ENCODE measurements at regions of chr6 and their contacts with region 1.

Region 1: GRCh38 chr6:123802697-123803496 is 768 bp upstream of the NKAIN2 start:
- DNase-seq: peak; percentile 80
- H3K4me3 ChIP-seq: peak overlapping the region; percentile 36 to 68 (median 56)
- H3K27ac ChIP-seq: no peak overlapping the region
- H3K4me1 ChIP-seq: peaks cover 9% of the 10 kb centered on the region
- H3K27me3 ChIP-seq: peaks cover 17 to 25% of the 10 kb centered on the region in 2 experiments
- CTCF ChIP-seq: peak; percentile 89 to 94
- POLR2A ChIP-seq: no peak

Region 2: GRCh38 chr6:123598011-123598410 is 204.9 kb before region 1 on chr6:
- CTCF ChIA-PET with region 1: no interaction called
- POLR2A ChIA-PET with region 1: no interaction called
- dilution Hi-C with region 1: no loop called
- intact Hi-C with region 1: no loop called
- DNase-seq: no peak
- H3K4me3 ChIP-seq: no peak overlapping the region
- H3K27ac ChIP-seq: no peak overlapping the region
- H3K4me1 ChIP-seq: no peaks in the 10 kb centered on the region
- H3K27me3 ChIP-seq: no peaks in the 10 kb centered on the region
- CTCF ChIP-seq: no peak
- POLR2A ChIP-seq: no peak

Region 3: DNA sequence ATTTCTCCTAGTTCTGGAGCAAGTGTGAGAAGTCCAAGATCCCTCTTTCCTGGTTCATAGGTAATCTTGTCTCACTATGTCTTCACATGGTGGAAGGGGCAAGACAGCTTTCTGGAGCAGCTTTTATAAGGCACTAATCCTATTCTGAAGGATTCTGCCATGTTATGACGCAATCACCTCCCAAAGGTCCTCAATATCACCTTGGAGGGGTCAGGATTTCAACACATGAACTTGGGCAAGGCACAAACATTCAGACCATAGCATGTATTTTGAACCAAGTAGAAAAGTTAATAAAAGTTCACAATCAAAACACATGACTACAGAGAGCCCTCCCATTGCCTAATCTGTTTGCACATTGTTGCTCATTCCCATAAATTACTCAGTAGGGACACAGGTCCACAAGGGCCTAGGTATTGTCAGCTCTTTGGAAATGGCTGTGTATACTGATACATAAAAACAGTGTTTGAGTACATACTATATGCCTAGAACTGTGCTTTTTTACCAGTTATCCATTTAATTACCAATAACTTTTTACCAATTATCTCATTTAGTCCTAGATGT is 154.8 kb before region 1 on chr6:
- CTCF ChIA-PET with region 1: no interaction called
- POLR2A ChIA-PET with region 1: no interaction called
- dilution Hi-C with region 1: no loop called
- intact Hi-C with region 1: no loop called
- DNase-seq: no peak
- H3K4me3 ChIP-seq: no peak overlapping the region
- H3K27ac ChIP-seq: no peak overlapping the region
- H3K4me1 ChIP-seq: peaks cover 7% of the 10 kb centered on the region
- H3K27me3 ChIP-seq: no peaks in the 10 kb centered on the region
- CTCF ChIP-seq: no peak
- POLR2A ChIP-seq: no peak

Region 4: DNA sequence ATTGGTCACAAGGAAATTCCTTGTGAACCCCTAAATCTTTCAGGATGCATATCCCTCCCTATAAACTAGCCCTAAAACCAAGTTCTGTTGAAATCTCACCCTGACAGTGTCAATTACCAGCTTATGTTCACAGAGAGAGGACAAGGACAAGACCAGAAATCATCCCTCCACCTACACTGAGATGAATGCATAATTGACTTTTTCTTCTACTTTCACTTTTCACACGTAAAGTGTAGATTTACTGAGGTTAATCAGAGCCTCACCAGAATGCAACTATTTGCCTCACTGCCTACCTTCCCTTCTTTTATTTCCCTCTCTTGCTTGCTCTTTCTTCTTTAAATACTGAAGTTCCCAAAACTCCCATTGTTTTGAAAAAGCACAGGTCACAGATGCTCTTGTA is 14.6 kb before region 1 on chr6:
- CTCF ChIA-PET with region 1: interaction called, 18 read pairs
- POLR2A ChIA-PET with region 1: no interaction called
- dilution Hi-C with region 1: no loop called
- intact Hi-C with region 1: no loop called
- DNase-seq: no peak
- H3K4me3 ChIP-seq: no peak overlapping the region
- H3K27ac ChIP-seq: no peak overlapping the region
- H3K4me1 ChIP-seq: no peaks in the 10 kb centered on the region
- H3K27me3 ChIP-seq: peaks cover 0 to 3% of the 10 kb centered on the region in 2 experiments
- CTCF ChIP-seq: no peak
- POLR2A ChIP-seq: no peak

Region 5: GRCh38 chr6:123965894-123966293 is 163.0 kb after region 1 on chr6:
- CTCF ChIA-PET with region 1: interaction called, 72 read pairs
- POLR2A ChIA-PET with region 1: no interaction called
- dilution Hi-C with region 1: no loop called
- intact Hi-C with region 1: loop called (anchors 1 kb)
- DNase-seq: peak; percentile 61
- H3K4me3 ChIP-seq: no peak overlapping the region
- H3K27ac ChIP-seq: no peak overlapping the region
- H3K4me1 ChIP-seq: no peaks in the 10 kb centered on the region
- H3K27me3 ChIP-seq: no peaks in the 10 kb centered on the region
- CTCF ChIP-seq: peak; percentile 47 to 48
- POLR2A ChIP-seq: no peak

Region 6: DNA sequence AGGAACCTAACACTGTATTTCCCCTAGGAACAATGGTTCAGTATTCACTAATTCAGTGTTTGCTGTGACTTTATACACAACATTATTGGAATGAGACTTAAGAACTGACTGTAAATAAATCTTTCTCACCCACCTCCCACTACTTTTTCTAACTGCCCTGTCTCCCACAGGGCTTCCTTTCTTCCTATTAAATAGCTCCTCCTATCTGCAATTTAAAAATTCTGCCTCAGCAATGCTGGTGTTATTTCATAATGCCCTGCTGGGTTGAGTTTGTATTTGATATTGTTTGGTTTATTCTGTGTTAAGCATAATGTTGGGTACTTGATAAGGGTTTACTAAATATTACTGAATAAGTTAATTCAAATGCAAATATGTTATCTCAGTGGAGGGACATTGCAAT is 586.2 kb after region 1 on chr6:
- CTCF ChIA-PET with region 1: interaction called, 13 read pairs
- POLR2A ChIA-PET with region 1: no interaction called
- dilution Hi-C with region 1: no loop called
- intact Hi-C with region 1: no loop called
- DNase-seq: no peak
- H3K4me3 ChIP-seq: no peak overlapping the region
- H3K27ac ChIP-seq: no peak overlapping the region
- H3K4me1 ChIP-seq: no peaks in the 10 kb centered on the region
- H3K27me3 ChIP-seq: no peaks in the 10 kb centered on the region
- CTCF ChIP-seq: no peak
- POLR2A ChIP-seq: no peak

Region 7: GRCh38 chr6:124758663-124759062 is 955.8 kb after region 1 on chr6:
- CTCF ChIA-PET with region 1: interaction called, 6 read pairs
- POLR2A ChIA-PET with region 1: no interaction called
- dilution Hi-C with region 1: no loop called
- intact Hi-C with region 1: loop called (anchors 2 kb)
- DNase-seq: no peak
- H3K4me3 ChIP-seq: no peak overlapping the region
- H3K27ac ChIP-seq: no peak overlapping the region
- H3K4me1 ChIP-seq: no peaks in the 10 kb centered on the region
- H3K27me3 ChIP-seq: no peaks in the 10 kb centered on the region
- CTCF ChIP-seq: no peak
- POLR2A ChIP-seq: no peak

Region 8: DNA sequence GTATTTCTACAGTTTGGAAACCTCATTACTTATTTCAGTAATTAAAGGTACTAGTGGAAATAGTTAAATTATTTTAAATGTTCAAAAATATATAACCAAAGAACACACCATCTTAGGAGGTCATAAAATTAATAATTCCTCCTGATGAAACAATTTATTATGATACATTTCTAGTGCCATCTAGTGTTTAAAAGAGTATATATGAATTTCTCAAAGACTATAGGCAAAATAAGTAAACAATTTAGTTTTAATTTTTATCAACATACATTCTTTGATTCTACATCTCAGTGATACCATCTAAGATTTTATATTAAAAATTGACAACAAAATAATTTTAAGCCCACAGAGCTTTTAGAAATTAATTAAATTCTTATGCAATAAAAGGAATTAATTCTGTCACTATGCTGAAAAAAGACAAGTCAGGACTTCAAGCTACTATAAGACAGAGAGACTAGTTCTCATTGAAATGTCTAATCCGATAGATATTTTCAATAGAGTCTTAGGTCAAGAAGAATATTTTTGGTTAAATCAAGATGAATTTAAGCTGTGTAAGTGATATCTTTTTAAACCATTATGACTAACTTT is 1051.5 kb after region 1 on chr6:
- CTCF ChIA-PET with region 1: interaction called, 94 read pairs
- POLR2A ChIA-PET with region 1: no interaction called
- dilution Hi-C with region 1: no loop called
- intact Hi-C with region 1: loop called (anchors 1 kb)
- DNase-seq: peak; percentile 16
- H3K4me3 ChIP-seq: no peak overlapping the region
- H3K27ac ChIP-seq: no peak overlapping the region
- H3K4me1 ChIP-seq: no peaks in the 10 kb centered on the region
- H3K27me3 ChIP-seq: peaks cover 0 to 3% of the 10 kb centered on the region in 2 experiments
- CTCF ChIP-seq: no peak
- POLR2A ChIP-seq: no peak

Measured in endothelial cell of umbilical vein (primary cell).